Caco-2 (cell line): ENCODE measurements at regions of chr6 and their contacts with region 1.

Region 1: DNA sequence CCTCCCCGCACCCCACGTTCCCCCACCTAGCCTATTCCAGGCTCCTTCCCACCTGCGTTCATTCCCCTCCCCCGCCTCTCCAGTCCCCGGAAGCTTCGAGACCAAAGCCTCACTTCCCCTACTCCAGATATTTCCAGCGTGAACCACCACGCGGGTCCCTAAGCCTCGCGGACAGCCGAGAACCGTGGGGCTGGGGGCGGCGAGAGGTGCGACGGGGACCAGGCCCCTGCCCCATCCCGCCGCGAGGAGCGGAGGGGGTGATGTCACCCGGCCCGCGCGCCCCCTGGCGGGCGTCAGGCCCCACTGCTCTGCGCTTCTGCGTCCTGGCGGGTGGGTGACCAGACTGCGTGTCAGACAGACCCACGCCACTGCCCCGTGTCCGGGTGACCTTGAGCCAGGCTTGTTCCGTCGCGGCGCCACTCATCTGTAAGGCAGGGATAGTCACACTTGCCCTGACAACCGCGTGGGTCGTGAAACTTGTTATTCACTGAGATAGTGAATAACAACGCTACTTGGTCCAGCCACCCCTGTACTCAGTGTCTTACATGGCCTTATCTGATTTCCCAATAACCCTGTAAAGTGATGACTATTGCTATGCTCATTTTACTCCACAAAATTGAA is 9.0 kb upstream of the HSP90AB1 start:
- DNase-seq: peak; percentile 69 to 90
- H3K4me3 ChIP-seq: peak overlapping the region; percentile 58
- H3K4me3 Mint-ChIP-seq: peak overlapping the region; percentile 89
- H3K27ac Mint-ChIP-seq: peak overlapping the region; percentile 95
- H3K4me1 ChIP-seq: peaks cover 19% of the 10 kb centered on the region
- H3K4me1 Mint-ChIP-seq: peaks cover 17% of the 10 kb centered on the region
- H3K27me3 ChIP-seq: no peaks in the 10 kb centered on the region
- H3K27me3 Mint-ChIP-seq: no peaks in the 10 kb centered on the region
- CTCF ChIP-seq: peak; percentile 92 to 93

Region 2: DNA sequence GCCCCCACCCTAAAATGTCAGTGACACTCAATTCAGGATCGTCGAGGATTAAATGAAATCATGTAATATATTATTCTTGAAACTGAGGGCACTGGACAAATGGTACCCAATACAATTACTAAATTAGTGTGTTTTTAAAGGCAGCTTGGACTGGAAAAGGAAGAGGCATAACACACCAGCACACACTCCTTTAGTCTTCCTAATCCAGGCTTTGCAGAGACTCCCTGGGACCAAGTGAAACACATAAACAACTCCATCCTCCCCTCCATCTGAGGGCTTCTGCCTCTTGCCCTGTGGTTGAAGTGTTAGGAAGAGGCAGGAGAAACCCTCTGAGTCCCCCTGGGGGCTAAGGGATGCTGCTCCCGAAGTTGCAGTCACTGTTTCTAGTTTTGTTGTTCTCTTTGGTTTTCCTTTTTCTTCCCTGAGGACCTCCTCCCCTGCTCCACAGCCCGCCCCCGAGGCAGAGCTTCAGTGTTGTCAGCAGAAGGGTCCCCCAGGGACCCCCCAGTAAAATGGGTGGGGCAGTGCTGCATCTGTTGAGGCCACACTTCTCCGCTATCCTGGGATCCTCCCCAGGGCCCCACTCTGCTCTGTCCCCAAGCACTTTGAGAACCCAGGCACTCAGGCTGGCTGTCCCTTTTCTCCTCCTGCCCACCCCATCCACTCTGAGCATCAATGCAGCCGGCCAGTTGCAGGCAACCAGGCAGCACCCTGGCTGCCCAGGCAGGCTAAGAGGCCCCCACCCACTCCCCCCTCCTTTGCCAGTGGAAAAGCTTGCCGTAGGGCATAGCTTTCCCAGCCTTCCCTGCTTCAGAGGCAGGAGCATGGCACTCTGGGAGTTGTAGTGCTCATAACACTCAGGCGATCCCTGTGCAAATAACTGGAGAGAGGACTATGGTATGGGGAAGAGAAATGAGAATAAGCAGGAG is 104.7 kb before region 1 on chr6:
- CTCF ChIA-PET with region 1: no interaction called
- POLR2A ChIA-PET with region 1: no interaction called
- intact Hi-C with region 1: no loop called
- DNase-seq: peak; percentile 76 to 80
- H3K4me3 ChIP-seq: no peak overlapping the region
- H3K4me3 Mint-ChIP-seq: no peak overlapping the region
- H3K27ac Mint-ChIP-seq: peak overlapping the region; percentile 60
- H3K4me1 ChIP-seq: peaks cover 16% of the 10 kb centered on the region
- H3K4me1 Mint-ChIP-seq: peaks cover 29% of the 10 kb centered on the region
- H3K27me3 ChIP-seq: no peaks in the 10 kb centered on the region
- H3K27me3 Mint-ChIP-seq: no peaks in the 10 kb centered on the region
- CTCF ChIP-seq: no peak

Region 3: GRCh38 chr6:44172731-44173500 is 65.0 kb before region 1 on chr6:
- CTCF ChIA-PET with region 1: interaction called, 6 read pairs
- POLR2A ChIA-PET with region 1: no interaction called
- intact Hi-C with region 1: loop called (anchors 1 kb)
- DNase-seq: peak; percentile 79 to 80
- H3K4me3 ChIP-seq: no peak overlapping the region
- H3K4me3 Mint-ChIP-seq: no peak overlapping the region
- H3K27ac Mint-ChIP-seq: no peak overlapping the region
- H3K4me1 ChIP-seq: peaks cover 8% of the 10 kb centered on the region; the same call in 1 of the 2 replicates
- H3K4me1 Mint-ChIP-seq: peaks cover 7% of the 10 kb centered on the region
- H3K27me3 ChIP-seq: no peaks in the 10 kb centered on the region
- H3K27me3 Mint-ChIP-seq: no peaks in the 10 kb centered on the region
- CTCF ChIP-seq: peak; percentile 79 to 88

Region 4: GRCh38 chr6:44397424-44398164 is 159.7 kb after region 1 on chr6:
- CTCF ChIA-PET with region 1: no interaction called
- POLR2A ChIA-PET with region 1: no interaction called
- intact Hi-C with region 1: no loop called
- DNase-seq: peak in 1 of 2 experiments; percentile 9
- H3K4me3 ChIP-seq: no peak overlapping the region
- H3K4me3 Mint-ChIP-seq: no peak overlapping the region
- H3K27ac Mint-ChIP-seq: no peak overlapping the region
- H3K4me1 ChIP-seq: no peaks in the 10 kb centered on the region
- H3K4me1 Mint-ChIP-seq: no peaks in the 10 kb centered on the region
- H3K27me3 ChIP-seq: no peaks in the 10 kb centered on the region
- H3K27me3 Mint-ChIP-seq: no peaks in the 10 kb centered on the region
- CTCF ChIP-seq: peak in 1 of 2 experiments; percentile 10